ENCODE measurements at regions of chr9 and their contacts with region 1.

Region 1: GRCh38 chr9:81656004-81656403 is 33.3 kb downstream of the TLE1 start:
- DNase-seq: no peak
- ATAC-seq: no peak
- H3K4me3 ChIP-seq: no peak overlapping the region
- H3K27ac ChIP-seq: no peak overlapping the region
- H3K4me1 ChIP-seq: peaks cover 42% of the 10 kb centered on the region
- H3K27me3 ChIP-seq: no peaks in the 10 kb centered on the region
- CTCF ChIP-seq: no peak

Region 2: DNA sequence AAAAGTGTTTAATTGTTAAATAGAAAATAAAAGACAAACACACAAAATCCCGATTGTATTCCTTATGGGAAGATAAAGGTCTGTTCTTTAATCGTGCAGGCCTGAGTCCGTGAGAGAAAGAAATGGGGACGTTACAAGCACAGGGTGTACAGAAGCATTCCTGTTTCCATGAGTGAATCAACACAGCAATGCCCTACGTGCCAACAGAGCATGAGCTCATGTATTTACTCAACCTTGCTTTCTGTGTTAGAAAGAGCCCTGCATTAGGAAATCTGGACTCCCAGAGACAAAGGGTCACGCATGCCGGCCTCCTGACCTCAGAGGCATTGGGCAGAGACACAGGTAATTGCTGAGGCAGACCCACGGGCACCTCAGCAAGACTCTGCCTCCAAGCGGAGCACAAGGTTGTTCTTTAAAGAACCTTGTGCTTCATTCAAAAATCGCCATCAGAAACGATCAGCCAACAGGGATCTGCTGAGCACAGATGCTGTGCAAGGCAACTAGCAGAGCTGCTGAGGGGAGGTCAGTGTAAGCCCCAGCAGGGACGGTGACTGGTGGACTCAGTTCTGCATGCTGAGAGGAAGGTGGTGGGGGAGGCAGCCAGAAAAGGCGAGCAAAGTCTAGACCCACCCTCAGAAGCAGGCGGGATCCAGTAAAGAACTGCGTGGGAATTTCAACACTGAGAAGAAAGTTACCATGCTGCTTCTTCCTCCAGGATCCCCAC is 67.7 kb before region 1 on chr9:
- CTCF ChIA-PET with region 1: no interaction called
- POLR2A ChIA-PET with region 1: interaction called, 10 read pairs
- intact Hi-C with region 1: loop called (anchors 1 kb)
- DNase-seq: peak; percentile 82
- ATAC-seq: peak; percentile 92
- H3K4me3 ChIP-seq: peak overlapping the region; percentile 48; the same call in 1 of the 2 replicates
- H3K27ac ChIP-seq: peak overlapping the region; percentile 91
- H3K4me1 ChIP-seq: peaks cover 29% of the 10 kb centered on the region
- H3K27me3 ChIP-seq: no peaks in the 10 kb centered on the region
- CTCF ChIP-seq: no peak

Region 3: GRCh38 chr9:81628897-81629296 is 27.1 kb before region 1 on chr9:
- CTCF ChIA-PET with region 1: no interaction called
- POLR2A ChIA-PET with region 1: interaction called, 3 read pairs
- intact Hi-C with region 1: loop called (anchors 1 kb)
- DNase-seq: peak; percentile 93
- ATAC-seq: peak; percentile 86
- H3K4me3 ChIP-seq: peak overlapping the region; percentile 9; the same call in 1 of the 2 replicates
- H3K27ac ChIP-seq: peak overlapping the region; percentile 91
- H3K4me1 ChIP-seq: peaks cover 56% of the 10 kb centered on the region
- H3K27me3 ChIP-seq: no peaks in the 10 kb centered on the region
- CTCF ChIP-seq: no peak

Region 4: GRCh38 chr9:81879501-81879916 is 223.5 kb after region 1 on chr9:
- CTCF ChIA-PET with region 1: no interaction called
- POLR2A ChIA-PET with region 1: no interaction called
- intact Hi-C with region 1: loop called (anchors 1 kb)
- DNase-seq: peak; percentile 59
- ATAC-seq: peak; percentile 87
- H3K4me3 ChIP-seq: peak overlapping the region; percentile 9; the same call in 1 of the 2 replicates
- H3K27ac ChIP-seq: peak overlapping the region; percentile 66
- H3K4me1 ChIP-seq: peaks cover 20% of the 10 kb centered on the region
- H3K27me3 ChIP-seq: no peaks in the 10 kb centered on the region
- CTCF ChIP-seq: no peak

Measured in PC-3 (cell line).